Panc1 (cell line): ENCODE measurements at regions of chr19 and their contacts with region 1.

Region 1: GRCh38 chr19:33569821-33570220 is 48.2 kb upstream of the PEPD start:
- DNase-seq: no peak
- ATAC-seq: no peak
- H3K4me3 ChIP-seq: no peak overlapping the region
- H3K27ac ChIP-seq: no peak overlapping the region
- H3K4me1 ChIP-seq: no peaks in the 10 kb centered on the region
- H3K27me3 ChIP-seq: peaks cover 18% of the 10 kb centered on the region
- CTCF ChIP-seq: no peak

Region 2: GRCh38 chr19:33508941-33509614 is 60.7 kb before region 1 on chr19:
- CTCF ChIA-PET with region 1: no interaction called
- POLR2A ChIA-PET with region 1: no interaction called
- in situ Hi-C with region 1: no loop called
- intact Hi-C with region 1: no loop called
- DNase-seq: no peak
- ATAC-seq: no peak
- H3K4me3 ChIP-seq: no peak overlapping the region
- H3K27ac ChIP-seq: no peak overlapping the region
- H3K4me1 ChIP-seq: no peaks in the 10 kb centered on the region
- H3K27me3 ChIP-seq: no peaks in the 10 kb centered on the region
- CTCF ChIP-seq: no peak

Region 3: DNA sequence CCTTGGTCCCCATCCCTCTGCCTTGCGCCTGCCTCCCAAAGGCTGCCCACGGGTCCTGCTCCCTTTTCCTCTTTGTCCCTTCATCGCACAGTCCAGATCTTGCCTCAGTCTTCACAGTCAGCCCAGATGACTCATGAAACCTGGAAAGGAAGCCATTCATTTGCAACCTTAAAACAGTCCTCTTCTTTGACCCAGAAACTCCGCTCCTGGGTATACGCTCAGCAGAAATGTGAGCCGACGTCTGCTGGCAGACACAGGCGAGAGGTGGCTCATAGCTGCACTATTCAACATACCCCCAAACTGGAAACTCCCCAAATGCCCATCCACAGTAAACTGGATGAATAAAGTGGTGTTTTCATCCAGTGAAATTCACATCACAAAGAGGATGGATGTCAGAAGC is 34.6 kb before region 1 on chr19:
- CTCF ChIA-PET with region 1: no interaction called
- POLR2A ChIA-PET with region 1: interaction called, 10 read pairs
- in situ Hi-C with region 1: no loop called
- intact Hi-C with region 1: no loop called
- DNase-seq: no peak
- ATAC-seq: no peak
- H3K4me3 ChIP-seq: no peak overlapping the region
- H3K27ac ChIP-seq: no peak overlapping the region
- H3K4me1 ChIP-seq: no peaks in the 10 kb centered on the region
- H3K27me3 ChIP-seq: peaks cover 2% of the 10 kb centered on the region; the same call in 1 of the 2 replicates
- CTCF ChIP-seq: no peak

Region 4: DNA sequence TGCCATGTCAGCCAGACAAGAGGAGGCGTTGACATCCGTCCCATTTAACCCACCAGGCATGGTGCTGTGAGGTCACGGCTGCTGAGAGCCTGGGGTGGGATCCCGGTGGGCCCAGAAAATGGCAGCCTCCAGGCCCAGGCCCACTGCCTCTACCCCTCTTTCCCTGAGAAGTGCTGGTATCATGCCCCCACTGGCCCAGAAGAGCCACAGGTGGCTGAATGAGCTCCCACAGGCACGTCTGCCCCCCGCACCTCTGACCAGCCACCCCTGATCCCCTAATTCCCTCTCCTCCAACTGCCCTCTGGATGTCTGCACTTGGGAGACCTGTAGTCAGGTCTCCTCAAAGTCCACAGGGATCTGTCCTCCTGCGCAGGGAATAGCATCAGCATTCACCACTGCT is 189.5 kb after region 1 on chr19:
- CTCF ChIA-PET with region 1: no interaction called
- POLR2A ChIA-PET with region 1: interaction called, 19 read pairs
- in situ Hi-C with region 1: no loop called
- intact Hi-C with region 1: no loop called
- DNase-seq: no peak
- ATAC-seq: no peak
- H3K4me3 ChIP-seq: no peak overlapping the region
- H3K27ac ChIP-seq: no peak overlapping the region
- H3K4me1 ChIP-seq: peaks cover 4% of the 10 kb centered on the region; the same call in 1 of the 2 replicates
- H3K27me3 ChIP-seq: 0 out of 2 replicates have a peak, but pooled peaks cover 3% of the 10 kb centered on the region
- CTCF ChIP-seq: no peak